ENCODE measurements at regions of chr2 and their contacts with region 1.

Region 1: DNA sequence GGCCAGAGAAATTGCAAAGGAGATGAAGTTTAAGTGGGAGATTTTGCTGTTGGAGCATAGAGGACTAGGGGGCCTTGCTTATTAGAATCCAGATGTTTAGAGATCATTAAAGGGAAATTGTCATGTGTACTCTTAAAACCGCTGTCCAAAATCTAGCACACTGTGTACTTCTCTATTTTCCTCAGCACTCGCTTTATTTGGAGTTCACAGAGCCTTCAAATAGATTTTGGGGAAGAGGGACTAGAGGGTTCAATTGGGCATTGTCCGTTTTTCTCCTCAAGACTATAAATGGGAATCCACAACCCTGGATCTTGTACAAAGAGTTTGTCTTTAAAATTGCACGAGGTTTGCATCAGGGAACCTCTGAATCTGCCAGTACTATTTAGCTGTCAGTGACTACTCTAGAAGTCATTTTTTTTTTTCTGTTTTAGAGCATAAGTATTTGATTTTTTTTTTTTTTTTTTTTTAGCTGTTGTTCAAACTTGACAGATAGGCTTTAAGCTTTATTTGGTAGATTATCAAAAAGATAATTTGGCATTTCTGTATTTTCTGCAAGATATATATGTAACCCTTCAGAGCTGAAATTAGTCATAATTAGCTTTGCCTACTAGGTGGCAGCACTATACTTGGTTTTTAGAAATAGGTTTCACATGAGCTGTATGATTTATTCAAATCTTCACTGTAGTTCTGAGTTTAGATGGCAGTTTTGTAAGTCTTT is 14.2 kb downstream of the PMS1 start:
- DNase-seq: peak; percentile 25
- H3K4me3 ChIP-seq: no peak overlapping the region
- H3K27ac ChIP-seq: no peak overlapping the region
- H3K4me1 ChIP-seq: peaks cover 14% of the 10 kb centered on the region
- H3K27me3 ChIP-seq: no peaks in the 10 kb centered on the region
- CTCF ChIP-seq: peak; percentile 49 to 54

Region 2: DNA sequence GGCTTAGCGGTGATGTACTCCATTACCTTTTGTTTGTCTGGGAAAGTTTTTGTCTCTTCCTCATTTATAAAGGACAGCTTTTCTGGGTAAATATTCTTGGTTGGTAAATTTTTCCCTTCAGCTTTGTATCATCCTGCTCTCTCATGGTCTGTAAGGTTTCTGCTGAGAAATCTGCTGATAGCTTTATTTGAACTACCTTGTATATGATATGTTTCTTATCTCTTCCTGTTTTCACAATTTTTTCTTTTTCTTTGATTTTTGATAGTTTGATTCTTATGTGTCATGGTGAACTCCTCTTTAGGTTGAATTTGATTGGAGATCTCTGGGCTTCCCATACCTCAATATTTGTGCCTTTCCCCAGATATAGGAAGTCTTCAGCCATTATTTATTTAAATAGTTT is 219.4 kb after region 1 on chr2:
- CTCF ChIA-PET with region 1: no interaction called
- dilution Hi-C with region 1: no loop called
- in situ Hi-C with region 1: no loop called
- intact Hi-C with region 1: loop called (anchors 5 kb)
- DNase-seq: no peak
- H3K4me3 ChIP-seq: no peak overlapping the region
- H3K27ac ChIP-seq: no peak overlapping the region
- H3K4me1 ChIP-seq: no peaks in the 10 kb centered on the region
- H3K27me3 ChIP-seq: no peaks in the 10 kb centered on the region
- CTCF ChIP-seq: no peak